AG04449 (cell line): ENCODE measurements at regions of chr5 and their contacts with region 1.

Region 1: GRCh38 chr5:179265514-179266290 is 79.6 kb downstream of the ADAMTS2 start:
- DNase-seq: peak; percentile 96
- H3K4me3 ChIP-seq: peak overlapping the region; percentile 23
- CTCF ChIP-seq: no peak

Region 2: GRCh38 chr5:179275941-179276837 is 10.5 kb after region 1 on chr5:
- CTCF ChIA-PET with region 1: interaction called, 13 read pairs
- POLR2A ChIA-PET with region 1: no interaction called
- DNase-seq: peak; percentile 88
- H3K4me3 ChIP-seq: no peak overlapping the region
- CTCF ChIP-seq: no peak

Region 3: DNA sequence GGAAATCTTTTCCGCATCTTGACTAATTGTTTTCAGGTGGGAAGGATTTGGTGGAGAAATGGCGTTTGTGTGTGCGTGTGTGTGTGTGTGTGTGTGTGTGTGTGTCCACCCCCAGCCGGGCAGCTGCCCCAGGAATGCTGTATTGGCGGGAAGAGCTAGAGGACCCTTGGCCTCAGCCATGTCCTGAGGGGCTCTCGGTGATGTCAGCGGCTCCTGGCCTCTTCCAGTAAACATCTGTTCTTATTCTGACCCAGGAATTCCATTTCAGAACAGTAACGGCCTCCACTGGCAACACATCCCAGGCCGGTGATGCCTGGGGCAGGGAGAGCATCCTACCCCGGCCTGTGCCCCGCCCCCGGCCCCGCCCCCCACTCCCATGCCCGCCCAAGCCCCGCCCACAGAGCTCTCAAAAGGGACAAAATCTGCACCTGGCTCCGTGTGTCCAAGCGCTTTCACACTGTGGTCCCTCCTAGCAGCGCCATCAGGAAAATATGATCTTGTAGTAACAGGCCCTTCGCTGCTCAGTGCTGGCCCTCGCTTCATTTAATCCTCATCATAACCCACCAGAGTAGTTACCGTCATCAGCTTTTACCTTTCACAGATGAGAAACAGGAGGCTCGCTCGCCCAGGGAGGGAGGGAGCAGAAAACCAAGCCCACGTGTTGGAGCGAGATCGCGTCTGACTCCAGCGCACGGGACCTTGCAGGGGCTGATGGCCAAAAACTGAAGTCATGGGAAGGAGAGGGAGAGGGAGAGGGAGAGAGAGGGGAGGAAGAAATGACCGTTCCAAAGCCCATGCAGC is 60.6 kb after region 1 on chr5:
- CTCF ChIA-PET with region 1: no interaction called
- POLR2A ChIA-PET with region 1: no interaction called
- DNase-seq: no peak
- H3K4me3 ChIP-seq: no peak overlapping the region
- CTCF ChIP-seq: no peak